CD4-positive, alpha-beta memory T cell (primary cell): ENCODE measurements at regions of chr12 and their contacts with region 1.

Region 1: DNA sequence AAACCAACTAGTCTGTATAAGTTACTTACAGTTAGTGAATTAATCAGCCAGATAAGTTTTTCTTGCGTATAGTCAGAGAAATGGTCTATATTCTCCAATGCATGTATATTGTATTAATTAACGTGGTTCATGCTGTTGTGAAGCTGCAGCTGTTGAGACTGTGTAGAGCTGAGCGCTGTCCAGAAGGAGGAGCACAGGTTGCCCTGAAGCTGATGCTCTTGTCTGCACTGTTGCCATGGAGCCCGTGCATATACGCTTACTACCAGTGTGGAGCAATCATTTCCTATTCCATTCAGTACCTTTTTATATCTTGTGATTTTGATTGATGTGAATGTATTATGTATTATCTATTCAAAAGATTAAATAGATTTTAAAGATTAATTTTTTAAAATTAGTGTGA is 74.3 kb upstream of the ARID2 start:
- DNase-seq: peak; percentile 49 to 81 (median 70)
- H3K4me3 ChIP-seq: no peak overlapping the region
- H3K4me3 Mint-ChIP-seq: no peak overlapping the region
- H3K27ac ChIP-seq: no peak overlapping the region
- H3K27ac Mint-ChIP-seq: no peak overlapping the region
- H3K4me1 ChIP-seq: no peaks in the 10 kb centered on the region
- H3K4me1 Mint-ChIP-seq: peaks cover 0 to 8% (median 4%) of the 10 kb centered on the region in 4 donors
- H3K27me3 ChIP-seq: no peaks in the 10 kb centered on the region
- H3K27me3 Mint-ChIP-seq: peaks cover 8 to 9% of the 10 kb centered on the region in 2 donors

Region 2: DNA sequence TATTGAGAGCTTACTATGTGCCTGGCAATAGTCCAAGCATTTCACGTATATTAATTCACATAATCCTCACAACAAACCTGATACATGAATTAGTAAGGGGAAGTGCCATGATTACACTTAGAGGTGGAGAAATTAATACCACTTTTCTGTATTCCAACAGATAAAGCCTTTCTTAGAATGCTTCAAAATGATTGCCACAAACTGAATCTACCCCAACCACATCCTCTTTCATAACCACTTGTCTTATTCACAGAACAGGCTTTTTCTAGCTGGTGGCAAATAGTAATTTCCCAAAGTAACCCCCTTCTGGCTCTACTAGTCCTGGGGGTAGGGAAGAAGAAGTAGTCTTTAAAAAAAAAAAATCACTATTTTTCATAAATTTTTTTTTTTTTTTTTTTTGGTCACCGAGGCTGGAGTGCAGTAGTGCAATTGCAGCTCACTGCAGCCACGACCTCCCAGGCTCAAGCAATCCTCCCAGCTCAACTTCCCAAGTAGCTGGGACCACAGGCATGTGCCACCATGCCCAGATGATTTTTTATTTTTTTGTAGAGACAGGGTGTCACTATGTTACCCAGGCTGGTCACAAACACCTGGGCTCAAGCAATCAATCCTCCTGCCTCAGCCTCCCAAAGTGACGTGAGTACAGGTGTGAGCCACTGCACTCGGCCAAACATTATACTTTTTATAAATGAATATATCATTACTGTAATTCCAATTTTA is 15.3 kb after region 1 on chr12:
- CTCF ChIA-PET with region 1: interaction called, 15 read pairs
- POLR2A ChIA-PET with region 1: interaction called, 8 read pairs
- intact Hi-C with region 1: no loop called
- DNase-seq: peak; percentile 30 to 61 (median 44)
- H3K4me3 ChIP-seq: peak overlapping the region in 1 of 2 donors; percentile 2
- H3K4me3 Mint-ChIP-seq: peak overlapping the region in 6 of 8 donors; percentile 15 to 62 (median 42)
- H3K27ac ChIP-seq: no peak overlapping the region
- H3K27ac Mint-ChIP-seq: peak overlapping the region in 2 of 7 donors; percentile 17 to 48
- H3K4me1 ChIP-seq: peaks cover 32% of the 10 kb centered on the region
- H3K4me1 Mint-ChIP-seq: peaks cover 21 to 39% (median 27%) of the 10 kb centered on the region in 4 donors
- H3K27me3 ChIP-seq: no peaks in the 10 kb centered on the region
- H3K27me3 Mint-ChIP-seq: no peaks in the 10 kb centered on the region

Region 3: GRCh38 chr12:45745861-45746277 is 90.7 kb after region 1 on chr12:
- CTCF ChIA-PET with region 1: interaction called, 46 read pairs
- POLR2A ChIA-PET with region 1: no interaction called
- intact Hi-C with region 1: loop called (anchors 1 kb)
- DNase-seq: peak in 4 of 5 donors; percentile 37 to 57 (median 48)
- H3K4me3 ChIP-seq: no peak overlapping the region
- H3K4me3 Mint-ChIP-seq: no peak overlapping the region
- H3K27ac ChIP-seq: no peak overlapping the region
- H3K27ac Mint-ChIP-seq: peak overlapping the region in 2 of 7 donors; percentile 12 to 64
- H3K4me1 ChIP-seq: peaks cover 50% of the 10 kb centered on the region
- H3K4me1 Mint-ChIP-seq: peaks cover 37 to 73% (median 50%) of the 10 kb centered on the region in 4 donors
- H3K27me3 ChIP-seq: no peaks in the 10 kb centered on the region
- H3K27me3 Mint-ChIP-seq: no peaks in the 10 kb centered on the region